A549 (cell line): ENCODE measurements at regions of chr14 and their contacts with region 1.

Region 1: DNA sequence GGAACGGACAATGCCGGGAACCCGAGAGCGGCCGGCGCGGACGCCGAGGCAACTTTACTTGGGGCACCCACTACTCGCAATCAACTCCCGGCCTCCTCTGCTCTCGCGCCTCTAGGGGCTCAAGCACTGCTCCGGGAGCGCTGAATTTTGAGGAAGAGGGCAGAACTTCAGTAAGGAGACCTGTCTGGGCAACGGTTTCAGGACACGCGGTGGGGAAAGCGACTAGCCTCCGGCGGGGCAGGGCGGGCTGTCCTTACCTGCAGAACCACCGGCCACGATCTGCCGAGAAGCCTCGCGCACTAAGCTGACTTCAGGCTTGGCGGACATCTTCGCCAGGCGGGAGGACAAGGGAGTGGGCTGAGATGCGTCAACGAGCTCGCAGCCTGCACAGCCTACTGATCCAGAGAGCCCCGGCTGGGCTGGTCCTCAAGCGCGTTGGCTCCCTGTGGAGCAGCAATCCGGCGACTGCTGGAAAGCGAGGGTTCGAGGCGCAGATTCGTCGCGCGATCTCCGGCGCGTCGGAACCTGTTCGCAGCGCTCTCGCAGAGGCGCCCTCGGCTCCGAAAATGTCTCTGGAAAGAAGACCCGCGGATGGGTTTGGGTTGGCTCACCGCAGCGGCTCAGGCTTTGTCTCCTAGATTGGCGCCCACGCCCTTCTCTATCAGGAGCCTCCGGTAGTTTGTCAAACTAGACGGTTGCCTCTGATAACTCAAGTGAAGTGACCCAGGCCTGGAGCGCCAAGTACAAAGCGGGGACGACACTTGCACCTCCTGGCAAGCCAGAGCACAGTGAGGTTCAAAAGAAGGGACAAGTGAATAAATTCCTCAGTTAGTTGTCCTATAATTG is at the start of gene SLC25A21:
- DNase-seq: peak; percentile 90 to 91
- ATAC-seq: peak; percentile 97 to 98
- H3K4me3 ChIP-seq: peak within 1 kb of the TSS; percentile 59
- H3K27ac ChIP-seq: peak within 1 kb of the TSS; percentile 82 to 89
- H3K4me1 ChIP-seq: peaks cover 7% of the 10 kb centered on the region; the same call in 2 of the 3 replicates
- CTCF ChIP-seq: no peak
- EP300 ChIP-seq: no peak
- POLR2A ChIP-seq: peak; percentile 84
- RAD21 ChIP-seq: peak in 1 of 2 experiments; percentile 16; a peak in 1 of 5 replicates
- polyA plus RNA-seq, gene SLC25A21: 1.3 and 1.4 TPM in 2 replicates

Region 2: GRCh38 chr14:37131205-37131604 is 41.0 kb before region 1 on chr14:
- CTCF ChIA-PET with region 1: no interaction called
- POLR2A ChIA-PET with region 1: no interaction called
- DNase-seq: no peak
- ATAC-seq: no peak
- H3K4me3 ChIP-seq: no peak overlapping the region
- H3K27ac ChIP-seq: no peak overlapping the region
- H3K4me1 ChIP-seq: no peaks in the 10 kb centered on the region
- CTCF ChIP-seq: no peak
- EP300 ChIP-seq: no peak
- POLR2A ChIP-seq: no peak
- RAD21 ChIP-seq: no peak

Region 3: GRCh38 chr14:37197421-37198272 is 25.4 kb after region 1 on chr14 and contains the start of gene MIPOL1:
- CTCF ChIA-PET with region 1: interaction called, 12 read pairs
- POLR2A ChIA-PET with region 1: interaction called, 20 read pairs
- DNase-seq: peak; percentile 76 to 89
- ATAC-seq: peak; percentile 97 to 99
- H3K4me3 ChIP-seq: peak within 1 kb of the TSS; percentile 64
- H3K27ac ChIP-seq: peak within 1 kb of the TSS; percentile 85 to 91
- H3K4me1 ChIP-seq: peaks cover 9% of the 10 kb centered on the region; the same call in 2 of the 3 replicates
- CTCF ChIP-seq: peak; percentile 47
- EP300 ChIP-seq: no peak
- POLR2A ChIP-seq: peak; percentile 75
- RAD21 ChIP-seq: peak in 1 of 2 experiments; percentile 54; a peak in 3 of 5 replicates
- polyA plus RNA-seq, gene MIPOL1: 8.6 and 13.4 TPM in 2 replicates